Naive thymus-derived CD4-positive, alpha-beta T cell (primary cell): ENCODE measurements at regions of chr10 and their contacts with region 1.

Region 1: DNA sequence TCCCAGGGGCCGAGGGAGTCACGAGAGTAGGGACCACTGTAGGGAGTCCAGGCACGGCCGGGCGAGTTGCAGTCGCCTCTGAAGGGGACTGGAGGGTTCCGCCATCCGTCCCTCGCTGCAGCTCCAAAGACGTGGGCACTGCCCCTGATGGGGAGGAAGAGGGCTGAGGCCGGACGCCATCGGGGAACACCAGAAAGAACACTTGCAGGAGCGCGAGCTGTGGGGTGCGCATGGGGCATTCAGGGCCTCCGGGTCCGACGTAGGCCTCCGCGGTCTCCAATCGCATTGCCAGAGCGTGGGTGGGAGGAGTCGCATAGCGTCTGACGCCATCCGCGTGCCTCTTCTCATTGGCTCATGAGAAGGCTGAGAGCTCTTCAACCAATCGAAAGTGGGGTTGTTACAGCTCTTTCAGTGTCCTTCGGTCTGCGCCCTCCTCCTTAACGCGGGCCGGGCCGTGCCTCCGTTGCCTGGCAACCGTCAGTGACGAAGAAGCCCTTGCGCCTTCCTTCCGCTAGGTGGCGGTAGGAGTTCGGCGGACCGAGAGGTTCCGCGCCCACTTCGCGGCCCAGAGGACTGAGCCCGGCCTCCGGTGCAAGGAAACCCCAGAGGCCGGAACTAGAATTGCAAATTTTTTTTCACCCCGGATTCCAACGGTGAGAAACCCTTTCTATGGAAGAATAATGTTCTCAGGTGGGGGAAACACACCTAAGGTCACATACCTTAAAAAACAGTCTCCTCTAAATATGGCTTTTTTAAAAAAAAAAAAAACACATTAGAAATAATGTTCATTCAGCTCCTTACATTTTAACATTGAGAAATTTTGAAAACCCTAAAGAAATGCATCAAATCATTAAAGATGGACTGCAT is at the start of gene TCTN3:
- DNase-seq: peak; percentile 85 to 98 (median 97)
- ATAC-seq: peak; percentile 98
- H3K4me3 ChIP-seq: peak within 1 kb of the TSS; percentile 93
- H3K4me3 Mint-ChIP-seq: peak within 1 kb of the TSS; percentile 89 to 99 (median 96)
- H3K27ac ChIP-seq: peak within 1 kb of the TSS; percentile 95
- H3K27ac Mint-ChIP-seq: peak within 1 kb of the TSS; percentile 91 to 98 (median 96)
- H3K4me1 ChIP-seq: peaks cover 11 to 15% of the 10 kb centered on the region in 2 donors
- H3K4me1 Mint-ChIP-seq: peaks cover 27 to 51% (median 42%) of the 10 kb centered on the region in 7 donors
- H3K27me3 ChIP-seq: no peaks in the 10 kb centered on the region
- H3K27me3 Mint-ChIP-seq: peaks cover 0 to 9% (median 2%) of the 10 kb centered on the region in 5 donors
- total RNA-seq, gene TCTN3: 16.2 to 38.3 (median 22.2) TPM

Region 2: GRCh38 chr10:93702211-93703001 is 1991.5 kb before region 1 on chr10 and contains the start of gene FRA10AC1:
- CTCF ChIA-PET with region 1: no interaction called
- POLR2A ChIA-PET with region 1: no interaction called
- intact Hi-C with region 1: loop called in 1 of 2 experiments (anchors 5 kb)
- DNase-seq: peak; percentile 77 to 92 (median 85)
- ATAC-seq: peak; percentile 97
- H3K4me3 ChIP-seq: peak within 1 kb of the TSS; percentile 85
- H3K4me3 Mint-ChIP-seq: no peak within 1 kb of the TSS
- H3K27ac ChIP-seq: peak within 1 kb of the TSS; percentile 73
- H3K27ac Mint-ChIP-seq: no peak within 1 kb of the TSS
- H3K4me1 ChIP-seq: peaks cover 9 to 16% of the 10 kb centered on the region in 2 donors
- H3K4me1 Mint-ChIP-seq: peaks cover 8 to 29% (median 11%) of the 10 kb centered on the region in 7 donors
- H3K27me3 ChIP-seq: no peaks in the 10 kb centered on the region
- H3K27me3 Mint-ChIP-seq: no peaks in the 10 kb centered on the region
- total RNA-seq, gene FRA10AC1: 15.5 to 31.0 (median 22.7) TPM

Region 3: DNA sequence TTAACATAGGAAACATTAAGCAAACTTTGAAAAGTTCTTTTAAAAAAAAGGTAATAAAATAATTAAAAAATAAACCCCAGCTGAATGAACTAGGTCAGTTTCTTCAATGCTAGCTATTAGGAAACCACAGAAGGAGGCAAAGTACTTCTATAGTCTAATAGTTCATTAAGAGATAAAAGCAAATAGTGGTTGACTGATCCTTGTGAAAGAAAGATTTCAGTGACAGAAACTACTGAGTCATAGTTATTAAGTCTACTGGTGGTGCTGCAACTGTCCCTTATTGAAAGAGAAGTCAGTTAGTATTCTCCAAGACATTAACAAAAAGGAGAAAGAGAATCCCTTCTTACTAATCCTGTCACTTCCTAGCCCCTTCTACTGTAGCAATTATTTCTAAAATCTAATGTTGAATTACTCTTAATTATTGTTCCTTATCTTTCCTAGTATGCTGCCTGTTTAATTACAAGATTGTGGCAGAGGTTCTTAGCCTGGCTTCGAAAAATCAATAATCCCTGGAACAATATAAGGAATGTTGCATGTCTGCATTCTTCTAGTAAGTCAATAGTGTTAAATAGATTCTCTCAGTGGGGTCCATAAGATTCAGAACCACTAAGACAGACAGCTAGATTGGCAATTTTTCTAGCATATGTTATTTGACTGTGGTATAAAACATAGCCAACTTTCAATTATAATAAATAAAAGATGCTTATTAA is 18.3 kb before region 1 on chr10:
- CTCF ChIA-PET with region 1: interaction called, 16 read pairs
- POLR2A ChIA-PET with region 1: no interaction called
- intact Hi-C with region 1: no loop called
- DNase-seq: no peak
- ATAC-seq: no peak
- H3K4me3 ChIP-seq: no peak overlapping the region
- H3K4me3 Mint-ChIP-seq: no peak overlapping the region
- H3K27ac ChIP-seq: no peak overlapping the region
- H3K27ac Mint-ChIP-seq: no peak overlapping the region
- H3K4me1 ChIP-seq: no peaks in the 10 kb centered on the region
- H3K4me1 Mint-ChIP-seq: no peaks in the 10 kb centered on the region
- H3K27me3 ChIP-seq: no peaks in the 10 kb centered on the region
- H3K27me3 Mint-ChIP-seq: no peaks in the 10 kb centered on the region

Region 4: GRCh38 chr10:95841661-95842498 is 148.0 kb after region 1 on chr10:
- CTCF ChIA-PET with region 1: interaction called, 23 read pairs
- POLR2A ChIA-PET with region 1: no interaction called
- intact Hi-C with region 1: loop called (anchors 1 kb)
- DNase-seq: peak in 7 of 9 donors; percentile 4 to 47 (median 28)
- ATAC-seq: peak; percentile 80
- H3K4me3 ChIP-seq: no peak overlapping the region
- H3K4me3 Mint-ChIP-seq: peak overlapping the region in 1 of 10 donors; percentile 62
- H3K27ac ChIP-seq: no peak overlapping the region
- H3K27ac Mint-ChIP-seq: peak overlapping the region in 1 of 9 donors; percentile 89
- H3K4me1 ChIP-seq: no peaks in the 10 kb centered on the region
- H3K4me1 Mint-ChIP-seq: peaks cover 0 to 59% (median 6%) of the 10 kb centered on the region in 7 donors
- H3K27me3 ChIP-seq: no peaks in the 10 kb centered on the region
- H3K27me3 Mint-ChIP-seq: peaks cover 0 to 9% (median 3%) of the 10 kb centered on the region in 5 donors

Region 5: DNA sequence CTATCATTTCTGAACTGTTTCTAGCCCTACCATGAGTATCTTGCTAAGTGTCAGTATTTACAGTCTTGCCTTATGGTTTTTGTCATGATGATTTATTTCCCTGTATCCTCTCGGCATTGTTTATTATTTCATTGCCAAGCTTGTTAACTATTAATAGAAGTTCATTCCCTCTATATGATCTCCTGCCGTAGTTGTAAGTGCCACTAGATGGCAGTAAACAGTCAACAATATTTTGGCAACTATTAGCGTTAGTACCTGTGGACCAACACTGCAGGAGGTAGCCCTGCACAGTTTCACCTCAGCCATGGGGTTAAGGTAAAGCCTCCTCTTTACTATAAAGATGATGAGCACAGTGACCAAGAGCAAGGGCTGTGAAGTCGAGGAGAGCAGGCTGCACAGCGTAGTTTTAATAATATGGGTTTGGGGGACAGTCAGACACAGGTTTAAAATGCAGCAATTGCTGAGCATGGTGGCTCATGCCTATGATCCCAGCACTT is 323.3 kb after region 1 on chr10:
- CTCF ChIA-PET with region 1: interaction called, 3 read pairs
- POLR2A ChIA-PET with region 1: no interaction called
- intact Hi-C with region 1: loop called (anchors 1 to 10 kb)
- DNase-seq: peak in 7 of 9 donors; percentile 17 to 57 (median 53)
- ATAC-seq: peak; percentile 90
- H3K4me3 ChIP-seq: no peak overlapping the region
- H3K4me3 Mint-ChIP-seq: no peak overlapping the region
- H3K27ac ChIP-seq: no peak overlapping the region
- H3K27ac Mint-ChIP-seq: no peak overlapping the region
- H3K4me1 ChIP-seq: no peaks in the 10 kb centered on the region
- H3K4me1 Mint-ChIP-seq: peaks cover 0 to 5% (median 3%) of the 10 kb centered on the region in 7 donors
- H3K27me3 ChIP-seq: peaks cover 0 to 5% of the 10 kb centered on the region in 2 donors
- H3K27me3 Mint-ChIP-seq: peaks cover 8 to 23% (median 14%) of the 10 kb centered on the region in 5 donors

Region 6: DNA sequence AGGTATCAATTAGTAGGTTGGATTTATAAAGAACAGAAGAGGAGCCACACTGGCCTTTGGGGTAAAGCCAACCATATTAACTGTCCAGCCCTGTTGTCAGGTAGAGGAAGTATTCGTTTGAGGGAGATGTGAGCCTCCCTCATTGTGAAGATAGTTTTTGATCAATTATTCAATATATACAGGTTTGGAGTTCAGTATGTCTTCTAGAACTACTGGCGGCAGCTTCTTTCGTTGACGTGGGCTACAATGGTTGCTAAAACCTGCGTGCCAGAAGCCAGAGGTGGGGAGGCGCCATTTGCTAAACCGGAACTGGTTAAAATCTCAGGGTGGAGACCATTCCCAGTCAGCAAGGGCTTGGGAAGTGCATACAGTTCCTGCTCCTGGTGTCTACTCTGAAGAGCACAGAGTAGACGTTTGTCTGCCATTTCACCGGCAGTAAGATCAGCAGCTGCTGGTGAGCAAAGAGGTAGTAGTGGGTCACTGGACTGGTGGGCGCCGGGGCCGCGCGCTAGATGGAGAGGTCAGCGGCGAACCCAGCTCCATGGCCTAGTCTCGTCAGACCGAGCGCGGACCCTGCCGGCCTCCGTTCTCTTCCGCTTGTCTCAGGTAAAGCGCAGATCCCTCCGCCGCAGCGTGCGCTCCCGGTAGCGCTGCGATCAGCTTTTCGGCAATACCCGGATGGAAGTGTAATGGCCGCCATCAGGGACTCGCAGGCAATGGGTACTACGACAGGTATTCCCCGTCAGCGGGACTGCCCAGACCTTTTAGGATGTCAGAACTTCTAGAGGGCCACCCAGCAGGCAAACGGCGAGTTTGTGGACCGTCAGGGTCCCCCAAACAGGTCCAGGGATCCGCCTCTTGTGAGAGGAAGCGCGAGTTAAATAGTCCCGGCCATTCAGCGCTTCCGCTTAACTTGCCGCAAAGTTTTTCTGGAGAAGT is 435.8 kb after region 1 on chr10 and contains the start of gene ZNF518A:
- CTCF ChIA-PET with region 1: no interaction called
- POLR2A ChIA-PET with region 1: interaction called, 13 read pairs
- intact Hi-C with region 1: loop called (anchors 1 kb)
- DNase-seq: peak; percentile 86 to 96 (median 94)
- ATAC-seq: peak; percentile 90
- H3K4me3 ChIP-seq: peak within 1 kb of the TSS; percentile 88
- H3K4me3 Mint-ChIP-seq: peak within 1 kb of the TSS; percentile 79 to 98 (median 94)
- H3K27ac ChIP-seq: peak within 1 kb of the TSS; percentile 97
- H3K27ac Mint-ChIP-seq: peak within 1 kb of the TSS; percentile 97 to 100 (median 99)
- H3K4me1 ChIP-seq: peaks cover 6 to 20% of the 10 kb centered on the region in 2 donors
- H3K4me1 Mint-ChIP-seq: peaks cover 7 to 35% (median 32%) of the 10 kb centered on the region in 7 donors
- H3K27me3 ChIP-seq: peaks cover 0 to 8% of the 10 kb centered on the region in 2 donors
- H3K27me3 Mint-ChIP-seq: peaks cover 30 to 46% (median 39%) of the 10 kb centered on the region in 5 donors
- total RNA-seq, gene ZNF518A: 17.6 to 25.1 (median 21.5) TPM